ENCODE measurements at regions of chr10 and their contacts with region 1.

Region 1: GRCh38 chr10:110803830-110804338 is 67.8 kb upstream of the PDCD4 start:
- DNase-seq: peak; percentile 49 to 50
- ATAC-seq: peak; percentile 84 to 95
- H3K4me3 ChIP-seq: no peak overlapping the region
- H3K27ac ChIP-seq: peak overlapping the region in 1 of 2 experiments; percentile 47; a peak in 1 of 6 replicates
- H3K4me1 ChIP-seq: peaks cover 9% of the 10 kb centered on the region; the same call in 1 of the 3 replicates
- CTCF ChIP-seq: peak; percentile 57
- EP300 ChIP-seq: no peak
- POLR2A ChIP-seq: no peak
- RAD21 ChIP-seq: peak; percentile 67 to 75

Region 2: DNA sequence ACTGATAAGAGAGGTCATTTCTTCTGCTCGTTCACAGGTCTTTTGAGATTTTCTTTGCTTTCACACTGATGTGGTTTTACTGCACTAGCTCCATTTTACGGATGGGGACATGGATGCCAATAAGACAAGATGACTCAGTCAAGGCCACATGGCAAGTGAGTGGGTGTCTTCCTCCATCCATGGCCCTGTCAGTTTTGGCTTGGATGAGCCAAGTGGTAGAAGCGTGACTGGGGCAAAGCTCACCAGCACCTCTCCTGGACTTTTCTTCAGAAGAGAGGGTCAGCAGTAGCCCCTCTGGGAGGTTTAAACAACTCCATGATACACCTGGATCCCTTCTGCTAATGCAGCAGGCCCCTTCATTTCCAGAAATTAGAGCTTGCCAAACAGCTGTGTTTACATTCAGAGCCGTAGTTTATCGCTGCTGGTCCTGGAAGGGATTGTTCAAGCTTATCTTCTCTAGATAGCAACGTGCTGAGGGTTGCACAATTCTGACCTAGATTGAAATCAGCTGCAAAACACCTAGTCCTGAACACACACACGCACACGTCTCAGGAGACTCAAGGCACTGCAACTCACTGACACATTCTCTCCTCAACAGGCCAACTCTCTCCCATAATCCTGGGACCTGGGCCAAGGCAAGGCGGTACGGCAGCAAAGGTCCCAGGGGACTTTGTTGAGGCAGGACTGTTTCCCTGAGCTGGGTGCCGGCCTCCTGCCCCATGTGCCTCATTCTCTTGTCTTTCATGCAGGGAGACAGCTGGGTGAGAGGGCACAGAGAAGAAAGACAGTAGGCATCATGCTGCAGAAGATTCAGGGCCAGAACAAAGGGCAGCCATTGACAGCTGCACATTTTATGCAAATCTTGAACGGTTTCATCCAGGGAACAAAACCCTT is 53.6 kb after region 1 on chr10:
- CTCF ChIA-PET with region 1: interaction called, 12 read pairs
- POLR2A ChIA-PET with region 1: no interaction called
- DNase-seq: no peak
- ATAC-seq: no peak
- H3K4me3 ChIP-seq: no peak overlapping the region
- H3K27ac ChIP-seq: no peak overlapping the region
- H3K4me1 ChIP-seq: peaks cover 10% of the 10 kb centered on the region; the same call in 2 of the 3 replicates
- CTCF ChIP-seq: no peak
- EP300 ChIP-seq: no peak
- POLR2A ChIP-seq: no peak
- RAD21 ChIP-seq: no peak

Region 3: DNA sequence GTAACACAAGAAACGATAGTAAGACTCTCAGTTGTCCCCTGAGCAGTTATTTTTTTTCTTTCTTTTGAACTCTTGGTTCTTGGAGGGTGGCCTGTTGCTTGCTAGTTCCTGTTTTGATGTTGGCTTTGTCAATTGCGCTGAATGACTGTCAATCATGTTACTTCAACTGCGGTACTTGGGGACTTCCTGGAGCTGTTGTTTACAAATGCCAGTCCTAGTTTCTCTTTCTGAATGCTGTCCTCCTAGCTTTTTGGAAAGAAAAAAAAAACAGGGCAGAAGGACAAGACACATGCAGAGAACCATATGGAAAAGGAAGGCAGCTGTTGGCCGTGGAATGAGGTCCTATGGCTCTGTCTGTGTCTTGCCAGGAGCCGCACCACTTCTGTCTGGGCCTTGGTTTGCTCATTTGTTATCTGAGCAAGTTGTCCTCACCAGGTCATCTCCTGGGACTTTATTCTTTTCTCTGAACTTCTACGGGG is 60.8 kb after region 1 on chr10:
- CTCF ChIA-PET with region 1: interaction called, 13 read pairs
- POLR2A ChIA-PET with region 1: no interaction called
- DNase-seq: no peak
- ATAC-seq: no peak
- H3K4me3 ChIP-seq: no peak overlapping the region
- H3K27ac ChIP-seq: peak overlapping the region; percentile 66 to 75
- H3K4me1 ChIP-seq: peaks cover 36% of the 10 kb centered on the region
- CTCF ChIP-seq: no peak
- EP300 ChIP-seq: no peak
- POLR2A ChIP-seq: no peak
- RAD21 ChIP-seq: no peak

Region 4: GRCh38 chr10:110936757-110937156 is 132.9 kb after region 1 on chr10:
- CTCF ChIA-PET with region 1: no interaction called
- POLR2A ChIA-PET with region 1: no interaction called
- DNase-seq: no peak
- ATAC-seq: no peak
- H3K4me3 ChIP-seq: no peak overlapping the region
- H3K27ac ChIP-seq: no peak overlapping the region
- H3K4me1 ChIP-seq: peaks cover 3% of the 10 kb centered on the region; the same call in 1 of the 3 replicates
- CTCF ChIP-seq: no peak
- EP300 ChIP-seq: no peak
- POLR2A ChIP-seq: no peak
- RAD21 ChIP-seq: no peak

Measured in A549 (cell line).